Prostate gland (tissue), 2 donors: ENCODE measurements at regions of chr9 and their contacts with region 1.

Region 1: GRCh38 chr9:15422372-15423230 is at the start of gene SNAPC3:
- DNase-seq: peak; percentile 91
- H3K4me3 ChIP-seq: peak within 1 kb of the TSS; percentile 68 to 82
- H3K27ac ChIP-seq: peak within 1 kb of the TSS; percentile 88
- H3K4me1 ChIP-seq: no peaks in the 10 kb centered on the region
- H3K27me3 ChIP-seq: no peaks in the 10 kb centered on the region
- CTCF ChIP-seq: peak in 2 of 4 experiments; percentile 31 to 41
- POLR2A ChIP-seq: peak; percentile 64
- total RNA-seq, gene SNAPC3: 24.2 to 61.9 TPM

Region 2: DNA sequence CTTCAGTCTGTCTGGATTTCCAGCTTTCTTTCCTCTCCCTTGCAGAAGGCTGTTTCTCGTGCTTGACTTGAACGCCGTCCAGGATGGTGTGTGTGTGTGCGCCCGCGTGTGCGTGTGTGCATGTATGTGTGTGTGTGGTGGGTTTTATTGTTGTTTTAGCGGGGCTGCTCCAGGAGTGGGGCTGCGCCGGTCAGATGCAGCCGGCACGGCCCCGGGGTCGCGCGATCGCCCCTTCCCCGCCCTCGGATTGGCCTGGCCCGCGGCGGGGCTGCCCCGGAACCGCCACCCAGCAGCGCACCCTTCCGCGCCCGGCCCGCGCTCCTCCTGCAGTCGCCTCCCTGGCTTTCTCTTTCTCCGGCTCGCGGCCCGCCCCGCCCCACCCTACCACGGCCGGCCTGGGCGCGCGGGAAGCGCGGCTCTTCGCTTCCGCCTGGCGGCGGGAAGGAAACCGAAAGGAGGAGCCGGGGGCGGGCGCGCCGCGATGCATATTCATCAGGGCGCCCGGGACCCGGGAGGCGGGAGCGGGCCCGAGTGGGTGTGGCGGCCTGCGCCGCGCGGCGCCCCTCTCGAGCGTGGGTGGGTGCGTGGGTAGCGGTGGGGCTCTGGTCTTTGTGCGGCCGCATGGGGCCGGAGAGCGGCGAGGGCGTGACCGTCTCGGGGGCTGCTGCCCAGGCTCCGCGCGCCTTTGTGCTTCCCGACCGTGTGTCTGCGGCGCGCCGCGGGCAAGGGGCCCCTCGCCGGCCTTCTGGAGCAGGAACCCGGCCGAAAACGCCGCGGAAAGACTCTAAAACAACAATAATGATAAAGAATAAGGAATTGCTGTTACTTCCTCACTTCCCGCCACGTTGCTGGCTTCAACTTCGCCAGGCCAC is 1100.2 kb before region 1 on chr9:
- intact Hi-C with region 1: no loop called
- DNase-seq: peak; percentile 93
- H3K4me3 ChIP-seq: peak overlapping the region; percentile 59 to 67
- H3K27ac ChIP-seq: peak overlapping the region; percentile 98 to 99
- H3K4me1 ChIP-seq: no peaks in the 10 kb centered on the region
- H3K27me3 ChIP-seq: no peaks in the 10 kb centered on the region
- CTCF ChIP-seq: peak; percentile 46 to 92 (median 58)
- POLR2A ChIP-seq: peak; percentile 70

Region 3: GRCh38 chr9:15306757-15307534 is 115.7 kb before region 1 on chr9 and contains the start of gene TTC39B:
- intact Hi-C with region 1: loop called (anchors 2 kb)
- DNase-seq: peak; percentile 92
- H3K4me3 ChIP-seq: peak within 1 kb of the TSS; percentile 79 to 83
- H3K27ac ChIP-seq: peak within 1 kb of the TSS; percentile 79 to 91
- H3K4me1 ChIP-seq: no peaks in the 10 kb centered on the region
- H3K27me3 ChIP-seq: no peaks in the 10 kb centered on the region
- CTCF ChIP-seq: peak in 3 of 4 experiments; percentile 24 to 31 (median 25)
- POLR2A ChIP-seq: peak; percentile 77
- total RNA-seq, gene TTC39B: 4.2 to 4.3 TPM

Region 4: DNA sequence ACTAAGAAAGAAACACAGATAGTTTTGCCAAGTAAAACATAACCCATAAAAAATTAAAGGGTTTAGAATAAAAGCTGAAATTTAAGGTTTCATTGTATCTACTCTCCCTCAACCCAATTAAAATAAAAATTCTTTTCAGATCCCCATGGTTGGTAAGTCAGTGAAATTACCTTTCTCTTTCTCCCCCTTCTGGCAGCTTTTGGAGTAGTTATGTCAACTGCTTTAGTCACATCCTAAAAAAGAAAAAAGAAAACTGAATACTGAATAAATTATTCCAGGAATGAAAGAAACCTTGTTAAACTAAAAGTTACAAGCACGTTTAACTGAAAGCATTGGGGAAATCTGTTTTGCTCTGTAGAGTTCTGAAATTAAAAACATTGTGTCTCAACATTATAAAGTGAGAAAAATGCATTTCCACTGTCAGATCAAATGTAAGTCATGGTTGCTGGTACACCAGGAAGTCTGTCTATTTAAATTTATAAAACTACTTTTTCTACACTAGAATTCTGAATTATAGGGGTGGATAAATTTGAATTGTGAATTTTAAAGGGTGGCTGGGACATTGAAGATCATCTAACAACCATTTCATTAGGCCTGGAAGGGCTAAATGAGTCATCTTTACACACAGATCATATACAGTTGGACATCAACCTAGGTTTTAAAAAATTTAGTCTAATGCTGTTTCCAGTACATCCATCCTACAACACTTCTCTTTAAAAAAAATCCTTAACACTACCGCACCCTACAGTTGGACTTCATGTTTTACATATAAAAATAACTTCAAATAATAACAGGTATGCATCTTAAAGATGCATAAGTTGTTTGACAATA is 63.5 kb after region 1 on chr9:
- intact Hi-C with region 1: no loop called
- DNase-seq: no peak
- H3K4me3 ChIP-seq: no peak overlapping the region
- H3K27ac ChIP-seq: no peak overlapping the region
- H3K4me1 ChIP-seq: no peaks in the 10 kb centered on the region
- H3K27me3 ChIP-seq: no peaks in the 10 kb centered on the region
- CTCF ChIP-seq: peak in 2 of 4 experiments; percentile 20 to 40
- POLR2A ChIP-seq: no peak

Region 5: DNA sequence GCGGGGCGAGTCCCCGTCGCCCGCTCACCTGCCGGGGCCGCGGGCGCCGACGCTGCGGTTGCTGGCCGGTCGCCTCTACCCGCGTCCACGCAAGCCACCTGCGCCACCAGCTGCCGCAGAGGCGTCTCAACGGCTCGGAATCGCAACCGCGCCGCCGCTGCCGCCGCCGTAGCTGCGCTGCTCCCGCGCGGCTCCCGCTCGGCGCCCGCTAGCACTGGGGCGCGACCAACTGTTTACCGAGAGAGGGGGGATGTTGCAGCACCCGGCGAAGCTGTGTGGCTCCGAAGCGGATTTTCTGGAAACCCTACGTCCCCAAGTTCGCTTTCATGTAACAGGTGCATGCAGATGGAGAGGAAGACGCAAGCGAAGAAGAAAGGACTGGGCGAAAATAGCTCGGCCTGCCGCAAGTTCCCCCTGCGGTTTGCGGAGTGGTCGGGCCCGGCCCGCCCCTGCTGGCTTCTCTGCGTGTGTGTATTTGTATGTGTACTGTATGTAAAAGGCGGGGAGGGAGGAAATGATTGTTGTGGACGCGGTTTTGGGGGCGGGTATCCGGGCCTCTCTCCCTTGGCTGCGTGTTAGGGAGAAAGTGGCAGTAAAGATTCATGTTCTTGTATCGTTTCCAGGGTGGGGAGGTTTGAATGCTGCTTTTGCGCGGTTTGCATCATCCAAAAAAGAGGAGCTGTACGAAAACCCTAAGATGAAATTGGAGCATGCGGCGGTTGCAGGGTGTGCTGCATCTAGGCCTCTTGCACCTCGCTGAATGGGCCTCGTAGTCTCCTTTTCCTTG is 88.4 kb after region 1 on chr9 and contains the start of gene PSIP1:
- intact Hi-C with region 1: loop called (anchors 5 kb)
- DNase-seq: peak; percentile 43
- H3K4me3 ChIP-seq: peak within 1 kb of the TSS; percentile 94 to 95
- H3K27ac ChIP-seq: peak within 1 kb of the TSS; percentile 79 to 86
- H3K4me1 ChIP-seq: no peaks in the 10 kb centered on the region
- H3K27me3 ChIP-seq: no peaks in the 10 kb centered on the region
- CTCF ChIP-seq: peak in 2 of 4 experiments; percentile 25 to 40
- POLR2A ChIP-seq: peak; percentile 62
- total RNA-seq, gene PSIP1: 65.3 to 69.6 TPM

Region 6: DNA sequence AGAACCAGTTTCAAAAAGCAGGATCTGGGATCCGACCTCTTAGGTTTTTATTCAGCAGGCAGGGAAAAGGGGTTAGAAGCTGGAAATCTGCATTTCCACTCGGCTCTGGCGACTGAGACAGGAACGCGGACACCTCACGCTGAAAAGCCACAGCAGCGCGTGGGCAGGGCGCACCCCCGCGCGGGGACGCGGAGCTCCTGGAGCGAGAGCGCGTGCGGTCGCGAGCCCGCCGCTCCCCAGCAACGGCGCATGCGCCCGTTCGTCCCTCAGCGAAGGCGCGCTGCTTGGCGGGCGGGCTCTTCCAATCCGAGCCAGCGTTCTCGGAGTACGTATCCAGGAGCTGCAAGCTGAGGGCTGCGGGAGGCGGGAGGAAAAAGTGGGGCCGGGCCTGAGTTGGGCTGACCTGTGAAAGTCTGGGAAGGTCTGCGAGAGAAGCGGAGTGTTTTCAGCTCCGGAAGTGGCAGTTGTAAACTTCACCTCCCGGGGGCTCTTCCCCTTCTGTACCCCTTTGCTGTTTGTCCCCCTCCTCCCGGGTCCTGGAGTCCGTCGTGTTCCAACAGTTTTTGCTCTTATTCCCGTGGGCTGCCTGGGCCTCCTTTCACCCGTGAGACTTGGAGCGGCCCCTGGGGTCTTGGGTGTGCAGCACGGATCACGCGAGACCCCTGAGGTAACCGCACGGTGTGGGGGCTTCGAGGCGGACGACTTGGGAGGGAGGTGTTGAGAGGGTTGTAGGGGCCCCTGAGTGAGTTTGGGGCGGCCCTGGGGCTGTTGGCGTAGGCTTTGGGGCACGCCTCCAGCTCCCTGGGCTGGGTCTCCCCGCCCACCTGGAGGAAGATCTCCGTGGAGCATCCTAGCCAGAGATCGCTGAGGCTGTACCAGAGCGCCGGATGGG is 130.3 kb after region 1 on chr9 and contains the start of gene CCDC171:
- intact Hi-C with region 1: loop called (anchors 5 kb)
- DNase-seq: peak; percentile 92
- H3K4me3 ChIP-seq: peak within 1 kb of the TSS; percentile 57 to 66
- H3K27ac ChIP-seq: peak within 1 kb of the TSS; percentile 79 to 82
- H3K4me1 ChIP-seq: no peaks in the 10 kb centered on the region
- H3K27me3 ChIP-seq: no peaks in the 10 kb centered on the region
- CTCF ChIP-seq: no peak
- POLR2A ChIP-seq: peak; percentile 77
- total RNA-seq, gene CCDC171: 2.0 to 7.6 TPM